ENCODE measurements at regions of chr12 and their contacts with region 1.

Region 1: GRCh38 chr12:48890657-48891418 is 25.2 kb upstream of the RND1 start:
- DNase-seq: peak; percentile 82
- ATAC-seq: peak; percentile 97
- H3K4me3 ChIP-seq: peak overlapping the region in 1 of 5 experiments; percentile 33
- H3K4me3 Mint-ChIP-seq: no peak overlapping the region
- H3K27ac ChIP-seq: no peak overlapping the region
- H3K27ac Mint-ChIP-seq: peak overlapping the region; percentile 32
- H3K4me1 ChIP-seq: peaks cover 8% of the 10 kb centered on the region in 2 donors
- H3K4me1 Mint-ChIP-seq: peaks cover 5% of the 10 kb centered on the region
- H3K27me3 ChIP-seq: peaks cover 0 to 18% (median 7%) of the 10 kb centered on the region in 4 experiments
- H3K27me3 Mint-ChIP-seq: peaks cover 13% of the 10 kb centered on the region
- CTCF ChIP-seq: peak; percentile 95

Region 2: DNA sequence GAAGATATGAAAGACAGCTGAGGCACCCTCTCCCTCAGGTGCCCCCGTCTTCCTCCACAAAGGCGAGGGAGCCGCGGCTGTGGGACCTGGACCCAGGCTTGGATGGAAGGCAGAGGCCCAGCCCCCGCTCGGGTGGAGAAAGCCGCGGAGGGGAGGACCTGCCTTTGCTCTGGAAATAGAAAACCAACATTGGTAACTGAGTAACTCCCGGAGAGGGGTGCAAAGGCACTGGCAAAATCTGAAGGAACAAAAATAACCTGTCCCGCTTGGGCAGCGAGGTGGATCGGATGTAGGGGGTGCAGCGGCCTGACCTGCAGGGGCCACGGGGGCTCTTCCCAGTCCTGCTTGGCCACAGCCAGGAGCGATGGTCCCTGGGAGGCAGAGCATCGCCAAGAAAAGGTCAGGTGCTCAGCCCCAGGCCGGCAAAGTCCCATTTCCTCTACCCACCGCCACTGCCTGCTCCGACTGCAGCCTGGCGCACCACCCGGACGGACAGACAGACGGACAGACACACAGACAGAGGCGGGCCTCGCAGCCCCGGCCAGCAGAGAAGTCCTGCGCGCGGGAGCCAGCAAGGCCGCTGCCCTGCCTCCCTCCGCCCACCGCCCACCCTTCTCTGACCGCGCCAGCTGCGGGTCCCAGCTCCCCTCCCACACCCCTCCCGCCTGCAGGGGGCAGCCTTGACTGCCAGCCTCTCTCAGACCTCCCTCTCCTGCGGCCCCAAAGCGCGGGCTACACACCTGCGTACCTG is 948.8 kb before region 1 on chr12:
- CTCF ChIA-PET with region 1: no interaction called
- POLR2A ChIA-PET with region 1: no interaction called
- intact Hi-C with region 1: no loop called
- DNase-seq: peak; percentile 66
- ATAC-seq: peak; percentile 53
- H3K4me3 ChIP-seq: no peak overlapping the region
- H3K4me3 Mint-ChIP-seq: no peak overlapping the region
- H3K27ac ChIP-seq: no peak overlapping the region
- H3K27ac Mint-ChIP-seq: no peak overlapping the region
- H3K4me1 ChIP-seq: peaks cover 0 to 4% of the 10 kb centered on the region in 2 donors
- H3K4me1 Mint-ChIP-seq: peaks cover 2% of the 10 kb centered on the region
- H3K27me3 ChIP-seq: peaks cover 0 to 8% (median 4%) of the 10 kb centered on the region in 4 experiments
- H3K27me3 Mint-ChIP-seq: peaks cover 37% of the 10 kb centered on the region
- CTCF ChIP-seq: peak; percentile 40

Region 3: GRCh38 chr12:48750769-48751735 is 139.8 kb before region 1 on chr12:
- CTCF ChIA-PET with region 1: interaction called, 3 read pairs
- POLR2A ChIA-PET with region 1: no interaction called
- intact Hi-C with region 1: loop called (anchors 5 kb)
- DNase-seq: no peak
- ATAC-seq: no peak
- H3K4me3 ChIP-seq: no peak overlapping the region
- H3K4me3 Mint-ChIP-seq: no peak overlapping the region
- H3K27ac ChIP-seq: no peak overlapping the region
- H3K27ac Mint-ChIP-seq: no peak overlapping the region
- H3K4me1 ChIP-seq: no peaks in the 10 kb centered on the region
- H3K4me1 Mint-ChIP-seq: no peaks in the 10 kb centered on the region
- H3K27me3 ChIP-seq: peaks cover 0 to 4% (median 0%) of the 10 kb centered on the region in 4 experiments
- H3K27me3 Mint-ChIP-seq: peaks cover 18% of the 10 kb centered on the region
- CTCF ChIP-seq: no peak

Region 4: DNA sequence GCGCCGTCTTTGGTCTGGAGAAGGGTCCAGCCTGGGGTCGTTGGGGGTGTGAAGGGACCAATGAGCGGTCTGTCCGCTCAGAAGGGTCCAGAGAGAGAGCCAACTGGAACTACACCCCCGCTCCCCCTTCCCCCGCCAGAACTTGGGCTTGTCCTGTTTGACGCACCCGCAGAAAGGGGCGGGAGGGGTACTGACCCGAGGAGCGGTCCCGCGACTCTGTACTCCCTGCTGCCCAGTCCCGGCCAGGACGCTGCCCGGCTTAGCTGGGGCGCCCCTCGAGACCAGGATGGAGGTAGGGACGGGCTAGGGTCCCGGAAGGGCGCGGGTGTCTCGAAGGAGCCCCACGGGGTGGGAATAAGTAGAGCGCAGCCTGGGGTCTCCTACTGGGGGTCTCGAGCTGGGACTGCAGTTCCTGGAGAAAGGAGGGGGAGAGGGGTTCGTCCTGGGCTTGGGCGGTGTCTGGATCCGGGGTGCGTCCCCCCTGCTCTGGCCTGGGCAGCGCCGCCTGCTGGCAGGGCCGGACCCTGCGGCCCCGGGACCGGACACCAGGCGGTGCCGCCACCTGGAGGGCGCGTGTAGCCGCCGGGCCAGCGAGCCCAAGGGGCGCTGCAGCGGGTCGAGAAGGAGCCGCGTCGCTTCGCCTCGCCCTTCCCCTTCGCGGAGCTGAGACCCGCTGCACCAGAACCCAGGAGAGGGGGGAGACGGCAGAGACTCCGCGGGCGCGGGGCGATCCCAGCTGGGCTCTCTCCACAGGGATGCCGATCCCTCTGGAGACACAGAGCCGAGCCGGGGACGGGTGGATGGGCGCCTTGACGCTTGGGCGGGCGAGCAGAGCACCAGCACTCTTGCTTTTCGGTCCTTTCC is 76.3 kb before region 1 on chr12:
- CTCF ChIA-PET with region 1: interaction called, 3 read pairs
- POLR2A ChIA-PET with region 1: no interaction called
- intact Hi-C with region 1: loop called (anchors 1 kb)
- DNase-seq: peak; percentile 87
- ATAC-seq: peak; percentile 81
- H3K4me3 ChIP-seq: peak overlapping the region; percentile 38 to 84 (median 69)
- H3K4me3 Mint-ChIP-seq: peak overlapping the region; percentile 96
- H3K27ac ChIP-seq: peak overlapping the region in 1 of 2 donors; percentile 32
- H3K27ac Mint-ChIP-seq: peak overlapping the region; percentile 53
- H3K4me1 ChIP-seq: peaks cover 30 to 38% of the 10 kb centered on the region in 2 donors
- H3K4me1 Mint-ChIP-seq: peaks cover 29% of the 10 kb centered on the region
- H3K27me3 ChIP-seq: peaks cover 0 to 31% (median 16%) of the 10 kb centered on the region in 4 experiments
- H3K27me3 Mint-ChIP-seq: peaks cover 12% of the 10 kb centered on the region
- CTCF ChIP-seq: peak; percentile 99

Region 5: GRCh38 chr12:48865434-48866290 is 25.2 kb before region 1 on chr12 and contains the start of gene RND1:
- CTCF ChIA-PET with region 1: interaction called, 303 read pairs
- POLR2A ChIA-PET with region 1: no interaction called
- intact Hi-C with region 1: no loop called
- DNase-seq: peak; percentile 93
- ATAC-seq: peak; percentile 91
- H3K4me3 ChIP-seq: peak within 1 kb of the TSS; percentile 39 to 73 (median 70)
- H3K4me3 Mint-ChIP-seq: peak within 1 kb of the TSS; percentile 93
- H3K27ac ChIP-seq: peak within 1 kb of the TSS; percentile 48 to 63
- H3K27ac Mint-ChIP-seq: peak within 1 kb of the TSS; percentile 74
- H3K4me1 ChIP-seq: peaks cover 21 to 24% of the 10 kb centered on the region in 2 donors
- H3K4me1 Mint-ChIP-seq: peaks cover 28% of the 10 kb centered on the region
- H3K27me3 ChIP-seq: peaks cover 0 to 9% (median 1%) of the 10 kb centered on the region in 4 experiments
- H3K27me3 Mint-ChIP-seq: no peaks in the 10 kb centered on the region
- CTCF ChIP-seq: no peak
- total RNA-seq, gene RND1: 18.7 and 19.5 TPM in 2 replicates

Region 6: GRCh38 chr12:48873096-48873495 is 17.7 kb before region 1 on chr12:
- CTCF ChIA-PET with region 1: interaction called, 53 read pairs
- POLR2A ChIA-PET with region 1: no interaction called
- intact Hi-C with region 1: no loop called
- DNase-seq: no peak
- ATAC-seq: no peak
- H3K4me3 ChIP-seq: no peak overlapping the region
- H3K4me3 Mint-ChIP-seq: no peak overlapping the region
- H3K27ac ChIP-seq: no peak overlapping the region
- H3K27ac Mint-ChIP-seq: no peak overlapping the region
- H3K4me1 ChIP-seq: no peaks in the 10 kb centered on the region
- H3K4me1 Mint-ChIP-seq: no peaks in the 10 kb centered on the region
- H3K27me3 ChIP-seq: no peaks in the 10 kb centered on the region
- H3K27me3 Mint-ChIP-seq: peaks cover 6% of the 10 kb centered on the region
- CTCF ChIP-seq: no peak

Region 7: DNA sequence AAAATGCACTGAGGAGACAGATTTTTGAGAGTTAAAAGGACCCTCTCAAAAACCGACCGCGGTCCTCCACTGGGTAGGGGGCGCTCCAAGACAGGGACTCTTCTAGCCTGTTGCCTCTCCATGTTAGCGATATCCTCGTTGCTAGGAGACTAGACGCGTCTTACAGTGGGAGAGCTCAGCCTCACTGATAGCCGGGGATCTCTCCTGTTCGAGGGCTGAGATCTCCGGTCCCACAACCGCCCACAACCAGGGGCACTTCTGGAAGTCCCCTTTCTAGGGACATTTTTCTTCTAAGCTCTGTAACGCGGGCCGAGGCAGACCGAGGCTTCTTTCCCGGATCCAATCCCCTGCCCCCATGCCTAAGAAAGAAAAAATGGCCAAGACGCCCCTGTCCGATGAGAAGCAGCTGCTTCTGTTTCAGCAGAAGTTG is 13.2 kb after region 1 on chr12:
- CTCF ChIA-PET with region 1: interaction called, 24 read pairs
- POLR2A ChIA-PET with region 1: no interaction called
- intact Hi-C with region 1: no loop called
- DNase-seq: peak; percentile 84
- ATAC-seq: peak; percentile 91
- H3K4me3 ChIP-seq: peak overlapping the region in 4 of 5 experiments; percentile 11 to 49 (median 40)
- H3K4me3 Mint-ChIP-seq: peak overlapping the region; percentile 83
- H3K27ac ChIP-seq: no peak overlapping the region
- H3K27ac Mint-ChIP-seq: no peak overlapping the region
- H3K4me1 ChIP-seq: peaks cover 11 to 12% of the 10 kb centered on the region in 2 donors
- H3K4me1 Mint-ChIP-seq: peaks cover 7% of the 10 kb centered on the region
- H3K27me3 ChIP-seq: peaks cover 0 to 5% (median 2%) of the 10 kb centered on the region in 4 experiments
- H3K27me3 Mint-ChIP-seq: peaks cover 19% of the 10 kb centered on the region
- CTCF ChIP-seq: peak; percentile 60